WTC11 (cell line): ENCODE measurements at regions of chr9 and their contacts with region 1.

Region 1: GRCh38 chr9:128438343-128439109 is 17.3 kb upstream of the ODF2 start:
- DNase-seq: peak; percentile 97
- ATAC-seq: peak; percentile 98
- H3K4me3 Mint-ChIP-seq: no peak overlapping the region
- H3K27ac Mint-ChIP-seq: no peak overlapping the region
- H3K4me1 Mint-ChIP-seq: peaks cover 9% of the 10 kb centered on the region
- H3K27me3 Mint-ChIP-seq: peaks cover 7% of the 10 kb centered on the region; the same call in 1 of the 2 replicates
- CTCF ChIP-seq: peak; percentile 98

Region 2: DNA sequence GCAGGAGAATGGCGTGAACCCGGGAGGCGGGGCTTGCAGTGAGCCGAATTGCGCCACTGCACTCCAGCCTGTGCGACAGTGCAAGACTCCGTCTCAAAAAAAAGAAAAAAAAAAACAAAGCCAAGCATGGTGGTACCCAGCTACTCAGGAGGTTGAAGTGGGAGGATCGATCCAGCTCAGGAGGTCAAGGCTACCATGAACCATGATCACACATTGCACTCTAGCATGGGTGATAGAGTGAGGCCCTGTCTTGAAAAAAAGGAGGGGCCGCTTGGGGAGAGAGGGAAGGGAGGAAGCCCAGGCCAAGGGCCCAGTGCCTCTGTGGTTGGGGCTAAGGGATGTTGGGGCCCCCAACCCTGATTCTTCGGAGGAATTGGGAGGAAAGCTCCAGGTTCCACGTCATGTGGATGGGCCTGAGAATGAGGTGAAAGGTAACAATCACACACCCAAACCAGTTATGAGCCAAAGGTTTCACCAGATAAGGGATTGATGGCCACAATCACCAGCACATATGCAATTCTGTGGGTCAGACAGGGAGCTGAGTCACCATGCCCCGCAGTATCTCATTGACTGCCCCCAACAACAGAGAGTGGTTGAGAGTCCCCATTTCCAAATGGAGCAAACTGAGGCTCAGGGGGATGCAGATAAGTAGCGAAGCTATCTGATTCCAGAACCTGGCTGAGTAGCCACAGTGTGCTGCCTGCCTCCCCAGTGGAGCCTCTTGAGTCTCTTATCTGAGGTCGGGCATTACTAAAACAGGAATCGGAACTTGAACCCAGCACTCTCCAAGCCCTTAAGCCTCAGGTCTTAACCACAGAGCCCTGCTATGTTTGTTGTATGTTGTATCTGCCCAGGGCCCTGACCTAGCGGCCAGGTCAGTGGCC is 141.9 kb before region 1 on chr9:
- CTCF ChIA-PET with region 1: interaction called, 15 read pairs
- POLR2A ChIA-PET with region 1: no interaction called
- DNase-seq: no peak
- ATAC-seq: no peak
- H3K4me3 Mint-ChIP-seq: no peak overlapping the region
- H3K27ac Mint-ChIP-seq: peak overlapping the region; percentile 23; the same call in 1 of the 2 replicates
- H3K4me1 Mint-ChIP-seq: no peaks in the 10 kb centered on the region
- H3K27me3 Mint-ChIP-seq: peaks cover 2% of the 10 kb centered on the region; the same call in 1 of the 2 replicates
- CTCF ChIP-seq: no peak

Region 3: DNA sequence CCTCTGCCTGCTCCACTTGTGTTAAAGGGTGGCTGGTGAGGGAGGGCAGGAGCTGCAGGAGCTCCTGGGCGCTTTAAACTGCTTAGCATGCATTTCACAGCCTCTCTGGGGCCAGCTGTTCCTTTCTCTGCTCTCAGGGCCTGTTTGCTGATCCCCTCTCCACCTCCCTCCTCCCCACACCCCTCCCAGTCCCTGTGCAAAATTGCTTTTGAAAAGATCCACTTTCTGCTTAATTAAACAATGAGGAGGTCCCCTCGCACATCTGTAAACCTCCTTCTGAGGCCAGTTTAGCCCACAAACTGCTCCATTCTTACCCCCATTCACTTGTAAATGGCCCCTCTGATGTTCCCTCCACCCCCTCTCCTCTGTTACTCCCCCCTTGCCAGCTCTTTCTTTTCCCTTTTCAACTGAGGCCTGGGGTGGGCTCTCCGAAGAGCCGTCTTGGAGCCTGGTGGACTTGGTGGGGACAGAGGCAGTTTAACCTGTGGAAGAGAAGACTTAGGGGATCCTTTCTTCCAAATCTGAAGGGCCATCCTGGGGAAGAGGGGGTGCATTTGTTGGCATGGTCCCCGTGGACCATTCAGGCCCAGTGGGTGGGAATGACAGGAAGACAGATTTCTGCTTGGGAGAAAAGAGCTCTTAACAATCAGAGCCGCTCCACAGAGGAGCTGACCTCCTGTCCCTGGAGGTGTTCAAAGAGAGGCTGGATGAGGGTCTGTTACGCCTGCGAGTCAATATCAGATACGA is 55.3 kb before region 1 on chr9:
- CTCF ChIA-PET with region 1: interaction called, 17 read pairs
- POLR2A ChIA-PET with region 1: no interaction called
- DNase-seq: peak; percentile 69
- ATAC-seq: peak; percentile 83
- H3K4me3 Mint-ChIP-seq: peak overlapping the region; percentile 28
- H3K27ac Mint-ChIP-seq: no peak overlapping the region
- H3K4me1 Mint-ChIP-seq: peaks cover 56% of the 10 kb centered on the region
- H3K27me3 Mint-ChIP-seq: peaks cover 84% of the 10 kb centered on the region
- CTCF ChIP-seq: no peak

Region 4: DNA sequence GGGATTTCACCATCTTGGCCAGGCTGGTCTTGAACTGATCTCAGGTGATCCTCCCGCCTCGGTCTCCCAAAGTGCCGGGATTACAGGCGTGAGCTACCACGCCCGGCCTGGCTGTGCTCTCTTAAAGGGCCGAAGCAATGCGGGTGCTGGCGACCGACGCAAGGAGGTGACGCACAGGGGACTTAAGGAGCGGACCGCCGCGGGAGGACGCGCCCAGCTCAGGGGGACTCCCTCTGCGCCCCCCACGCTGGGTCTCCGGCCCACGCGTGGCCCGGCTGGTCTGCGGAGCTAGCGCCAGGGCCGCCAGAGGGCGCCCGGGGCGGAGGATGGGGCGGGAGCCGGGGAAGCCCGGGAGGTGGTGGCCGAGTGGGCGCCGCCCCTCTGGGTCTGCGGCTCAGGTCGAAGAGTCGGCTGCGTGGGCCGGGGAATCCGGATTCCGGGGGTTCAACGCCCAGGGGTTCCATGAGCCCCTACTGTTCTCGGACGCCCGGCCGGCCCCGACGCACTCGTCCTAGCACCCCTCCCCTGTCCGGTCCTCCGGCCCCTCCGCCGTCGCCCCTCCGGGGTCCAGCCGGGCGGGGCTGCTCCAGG is 18.4 kb before region 1 on chr9:
- CTCF ChIA-PET with region 1: interaction called, 58 read pairs
- POLR2A ChIA-PET with region 1: no interaction called
- DNase-seq: peak; percentile 63
- ATAC-seq: peak; percentile 55
- H3K4me3 Mint-ChIP-seq: peak overlapping the region; percentile 67
- H3K27ac Mint-ChIP-seq: no peak overlapping the region
- H3K4me1 Mint-ChIP-seq: peaks cover 27% of the 10 kb centered on the region
- H3K27me3 Mint-ChIP-seq: peaks cover 51% of the 10 kb centered on the region
- CTCF ChIP-seq: peak; percentile 42

Region 5: DNA sequence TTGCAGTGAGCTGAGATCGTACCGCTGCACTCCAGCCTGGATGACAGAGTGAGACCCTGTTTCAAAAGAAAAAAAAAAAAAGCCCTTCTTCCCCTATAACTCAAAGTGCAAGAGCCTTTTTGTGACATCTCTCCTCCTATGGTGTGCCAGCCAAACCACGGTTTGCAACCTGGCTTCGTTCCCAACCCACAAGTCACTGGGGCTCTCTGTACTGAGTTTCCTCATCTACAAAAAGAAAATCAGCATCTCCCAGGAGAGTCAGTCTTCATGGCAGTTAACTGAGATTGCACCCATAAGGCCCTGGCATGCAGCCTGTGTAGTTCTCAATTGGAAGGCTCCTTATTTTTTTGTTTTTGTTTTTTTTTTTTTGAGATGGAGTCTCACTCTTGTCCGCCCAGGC is 32.0 kb after region 1 on chr9:
- CTCF ChIA-PET with region 1: interaction called, 11 read pairs
- POLR2A ChIA-PET with region 1: no interaction called
- DNase-seq: no peak
- ATAC-seq: no peak
- H3K4me3 Mint-ChIP-seq: no peak overlapping the region
- H3K27ac Mint-ChIP-seq: no peak overlapping the region
- H3K4me1 Mint-ChIP-seq: no peaks in the 10 kb centered on the region
- H3K27me3 Mint-ChIP-seq: no peaks in the 10 kb centered on the region; the same call in 1 of the 2 replicates
- CTCF ChIP-seq: no peak

Region 6: GRCh38 chr9:128494108-128494745 is 55.7 kb after region 1 on chr9:
- CTCF ChIA-PET with region 1: interaction called, 12 read pairs
- POLR2A ChIA-PET with region 1: interaction called, 4 read pairs
- DNase-seq: no peak
- ATAC-seq: no peak
- H3K4me3 Mint-ChIP-seq: no peak overlapping the region
- H3K27ac Mint-ChIP-seq: no peak overlapping the region
- H3K4me1 Mint-ChIP-seq: no peaks in the 10 kb centered on the region
- H3K27me3 Mint-ChIP-seq: no peaks in the 10 kb centered on the region
- CTCF ChIP-seq: no peak

Region 7: DNA sequence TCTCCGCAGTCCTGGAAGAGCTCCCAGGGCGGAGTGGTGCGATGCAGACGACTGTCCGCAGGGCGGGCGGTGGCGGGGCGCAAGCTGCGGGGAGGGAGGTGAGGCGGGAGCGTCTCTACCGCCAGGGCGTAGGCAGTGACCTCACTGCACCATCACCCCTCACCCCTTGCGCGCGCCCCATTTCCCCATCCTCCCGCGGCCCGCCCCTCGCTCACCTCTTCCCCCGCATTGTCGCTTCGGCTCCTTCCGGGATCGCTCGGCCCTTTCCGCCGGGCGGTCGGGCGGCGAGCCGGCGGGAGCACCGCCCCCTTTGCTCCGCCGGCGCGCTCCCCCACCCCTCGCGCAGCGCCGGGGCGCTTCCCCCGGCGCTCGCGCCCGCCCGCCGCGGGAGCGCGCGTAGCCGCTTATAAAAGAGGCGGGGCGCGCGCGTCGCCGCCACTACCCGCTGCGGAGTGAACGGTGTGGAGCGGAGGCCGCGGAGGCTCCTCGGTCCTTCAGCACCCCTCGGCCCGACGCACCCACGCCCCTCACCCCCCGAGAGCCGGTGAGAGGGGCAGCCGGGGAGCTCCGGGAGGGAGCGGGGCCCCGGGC is 113.7 kb after region 1 on chr9 and contains the start of gene SPTAN1:
- CTCF ChIA-PET with region 1: interaction called, 26 read pairs
- POLR2A ChIA-PET with region 1: interaction called, 5 read pairs
- DNase-seq: peak; percentile 96
- ATAC-seq: peak; percentile 85
- H3K4me3 Mint-ChIP-seq: peak within 1 kb of the TSS; percentile 92
- H3K27ac Mint-ChIP-seq: peak within 1 kb of the TSS; percentile 99
- H3K4me1 Mint-ChIP-seq: peaks cover 31% of the 10 kb centered on the region
- H3K27me3 Mint-ChIP-seq: peaks cover 3% of the 10 kb centered on the region; the same call in 1 of the 2 replicates
- CTCF ChIP-seq: no peak
- total RNA-seq, gene SPTAN1: 213 to 255 TPM (median 224 TPM) in 3 replicates